ENCODE measurements at regions of chr12 and their contacts with region 1.

Region 1: GRCh38 chr12:5244513-5244972 is 187.4 kb upstream of the NTF3 start:
- DNase-seq: no peak
- H3K4me3 ChIP-seq: no peak overlapping the region
- H3K27ac ChIP-seq: no peak overlapping the region
- H3K4me1 ChIP-seq: no peaks in the 10 kb centered on the region
- H3K27me3 ChIP-seq: peaks cover 3% of the 10 kb centered on the region
- CTCF ChIP-seq: no peak

Region 2: GRCh38 chr12:5220835-5221234 is 23.7 kb before region 1 on chr12:
- CTCF ChIA-PET with region 1: no interaction called
- dilution Hi-C with region 1: no loop called
- in situ Hi-C with region 1: no loop called
- intact Hi-C with region 1: no loop called
- DNase-seq: peak; percentile 55
- H3K4me3 ChIP-seq: no peak overlapping the region
- H3K27ac ChIP-seq: no peak overlapping the region
- H3K4me1 ChIP-seq: no peaks in the 10 kb centered on the region
- H3K27me3 ChIP-seq: peaks cover 4% of the 10 kb centered on the region
- CTCF ChIP-seq: no peak

Region 3: DNA sequence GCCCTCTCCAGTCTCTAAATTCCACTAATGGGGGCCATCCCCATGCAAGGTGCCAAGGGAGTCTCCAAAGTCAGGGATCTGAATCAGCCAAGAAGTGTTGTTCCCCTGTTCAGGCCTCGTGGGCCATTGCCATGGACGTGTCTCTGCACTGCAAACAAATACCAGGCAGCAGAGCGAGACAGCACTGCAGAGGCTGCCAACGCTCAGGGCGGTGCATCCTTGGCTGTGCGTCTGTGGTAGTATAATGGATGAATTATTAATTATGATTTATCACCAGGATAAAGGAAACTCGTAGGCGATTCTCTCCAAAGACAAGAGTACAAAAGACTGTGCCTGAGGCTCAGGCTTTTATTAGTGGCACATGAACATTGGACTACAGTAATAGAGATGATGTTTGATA is 65.1 kb after region 1 on chr12:
- CTCF ChIA-PET with region 1: no interaction called
- dilution Hi-C with region 1: loop called (anchors 10 kb)
- in situ Hi-C with region 1: no loop called
- intact Hi-C with region 1: no loop called
- DNase-seq: peak; percentile 50
- H3K4me3 ChIP-seq: no peak overlapping the region
- H3K27ac ChIP-seq: no peak overlapping the region
- H3K4me1 ChIP-seq: peaks cover 4% of the 10 kb centered on the region
- H3K27me3 ChIP-seq: no peaks in the 10 kb centered on the region
- CTCF ChIP-seq: no peak